ENCODE measurements at regions of chr13 and their contacts with region 1.

Region 1: GRCh38 chr13:46553886-46554858 is 1.2 kb downstream of the LRCH1 start:
- DNase-seq: peak; percentile 89
- H3K4me3 ChIP-seq: peak overlapping the region; percentile 91 to 98 (median 96)
- H3K27ac ChIP-seq: peak overlapping the region; percentile 88
- H3K4me1 ChIP-seq: peaks cover 13% of the 10 kb centered on the region
- H3K27me3 ChIP-seq: no peaks in the 10 kb centered on the region
- CTCF ChIP-seq: peak; percentile 3 to 31

Region 2: GRCh38 chr13:46359750-46360149 is 194.4 kb before region 1 on chr13:
- CTCF ChIA-PET with region 1: no interaction called
- dilution Hi-C with region 1: no loop called
- in situ Hi-C with region 1: no loop called
- intact Hi-C with region 1: no loop called
- DNase-seq: no peak
- H3K4me3 ChIP-seq: no peak overlapping the region
- H3K27ac ChIP-seq: no peak overlapping the region
- H3K4me1 ChIP-seq: peaks cover 8% of the 10 kb centered on the region
- H3K27me3 ChIP-seq: no peaks in the 10 kb centered on the region
- CTCF ChIP-seq: no peak

Region 3: DNA sequence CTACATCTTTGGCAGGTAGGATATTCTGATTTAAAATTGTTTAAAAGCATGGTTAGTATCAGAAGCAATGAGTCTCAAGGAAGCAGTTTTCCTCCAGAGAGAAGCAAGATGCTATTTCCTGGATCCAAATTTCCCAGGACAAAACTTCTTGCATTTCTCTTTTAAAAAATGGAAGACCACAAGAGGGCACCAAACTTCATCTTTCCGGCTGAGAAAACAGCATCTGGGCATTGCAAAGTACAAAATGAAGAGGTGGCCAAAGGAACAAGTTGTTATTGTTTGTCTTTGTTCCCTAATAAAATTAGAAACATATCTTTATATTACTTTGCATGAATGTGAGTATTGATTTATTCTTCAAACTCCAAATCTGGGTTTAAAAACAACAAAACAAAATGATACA is 61.2 kb before region 1 on chr13:
- CTCF ChIA-PET with region 1: no interaction called
- dilution Hi-C with region 1: no loop called
- in situ Hi-C with region 1: no loop called
- intact Hi-C with region 1: loop called (anchors 1 kb)
- DNase-seq: peak; percentile 16
- H3K4me3 ChIP-seq: no peak overlapping the region
- H3K27ac ChIP-seq: no peak overlapping the region
- H3K4me1 ChIP-seq: peaks cover 3% of the 10 kb centered on the region
- H3K27me3 ChIP-seq: no peaks in the 10 kb centered on the region
- CTCF ChIP-seq: peak; percentile 41 to 63

Region 4: GRCh38 chr13:46603165-46603603 is 49.0 kb after region 1 on chr13:
- CTCF ChIA-PET with region 1: no interaction called
- dilution Hi-C with region 1: no loop called
- in situ Hi-C with region 1: no loop called
- intact Hi-C with region 1: loop called (anchors 2 kb)
- DNase-seq: no peak
- H3K4me3 ChIP-seq: no peak overlapping the region
- H3K27ac ChIP-seq: no peak overlapping the region
- H3K4me1 ChIP-seq: peaks cover 36% of the 10 kb centered on the region
- H3K27me3 ChIP-seq: no peaks in the 10 kb centered on the region
- CTCF ChIP-seq: peak; percentile 17 to 38

Region 5: DNA sequence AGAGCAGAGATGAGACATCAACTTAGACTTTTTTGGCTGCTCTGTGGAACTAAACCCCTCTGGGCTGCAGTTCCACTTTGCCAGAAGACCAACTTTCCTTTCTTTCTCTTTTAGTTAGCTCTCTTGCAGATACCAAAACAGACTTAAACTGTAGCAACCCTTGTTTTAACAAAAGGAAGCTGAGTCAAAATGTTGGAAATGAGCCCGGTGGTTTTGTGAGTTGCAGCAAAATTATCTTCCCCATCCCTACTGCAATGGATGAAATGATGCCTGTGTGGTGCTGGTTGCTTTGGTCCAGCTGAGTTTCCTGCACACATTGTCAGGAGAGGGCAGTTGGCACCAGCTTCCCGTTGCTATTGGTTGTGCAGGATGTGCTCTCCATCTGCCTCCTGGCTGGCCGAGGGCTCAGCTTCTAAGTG is 114.1 kb after region 1 on chr13:
- CTCF ChIA-PET with region 1: interaction called, 16 read pairs
- dilution Hi-C with region 1: no loop called
- in situ Hi-C with region 1: no loop called
- intact Hi-C with region 1: no loop called
- DNase-seq: peak; percentile 78
- H3K4me3 ChIP-seq: no peak overlapping the region
- H3K27ac ChIP-seq: no peak overlapping the region
- H3K4me1 ChIP-seq: peaks cover 6% of the 10 kb centered on the region
- H3K27me3 ChIP-seq: no peaks in the 10 kb centered on the region
- CTCF ChIP-seq: no peak

Region 6: DNA sequence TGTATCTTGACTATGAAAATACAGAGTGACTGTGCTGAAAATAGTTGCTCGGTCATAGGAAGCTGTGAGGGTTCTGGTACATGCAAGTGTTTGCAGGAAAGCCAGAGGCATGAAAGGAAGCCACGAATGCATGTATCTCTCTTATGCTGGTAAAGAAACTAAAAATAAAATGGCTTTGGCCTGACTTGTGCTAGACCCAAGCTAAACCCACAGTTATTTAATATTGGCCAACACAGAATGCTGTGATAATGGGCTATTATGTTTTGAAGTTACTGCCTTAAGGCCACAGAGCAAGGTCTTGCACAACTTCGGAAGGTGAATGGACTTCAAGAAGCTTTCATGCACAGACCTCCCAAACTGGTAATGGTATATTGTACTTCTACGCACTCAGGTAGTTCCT is 860.9 kb after region 1 on chr13:
- CTCF ChIA-PET with region 1: interaction called, 13 read pairs
- dilution Hi-C with region 1: no loop called
- in situ Hi-C with region 1: no loop called
- intact Hi-C with region 1: no loop called
- DNase-seq: peak; percentile 39
- H3K4me3 ChIP-seq: no peak overlapping the region
- H3K27ac ChIP-seq: no peak overlapping the region
- H3K4me1 ChIP-seq: no peaks in the 10 kb centered on the region
- H3K27me3 ChIP-seq: no peaks in the 10 kb centered on the region
- CTCF ChIP-seq: no peak

Measured in mammary epithelial cell (primary cell).